ENCODE measurements at regions of chr20 and their contacts with region 1.

Region 1: DNA sequence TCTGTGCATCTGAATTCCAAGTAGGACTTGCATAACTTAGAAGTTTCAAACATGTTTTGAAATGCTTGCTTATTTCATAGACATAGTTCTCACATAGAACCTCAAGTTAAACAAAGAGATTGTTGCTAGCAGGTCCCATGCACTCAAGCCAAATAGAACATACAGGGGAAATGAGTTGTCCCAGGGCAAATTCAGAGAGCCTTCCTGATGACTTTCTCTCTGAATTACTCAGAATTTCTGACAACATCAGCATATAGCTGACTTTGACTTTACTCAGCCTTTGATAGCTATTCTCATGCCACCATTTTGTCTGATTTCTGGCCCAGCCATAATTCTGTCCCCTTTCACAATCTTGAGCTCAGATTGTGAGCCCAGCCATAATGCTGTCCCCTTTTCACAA is 333.2 kb upstream of the PLCB4 start:
- DNase-seq: no peak
- H3K4me3 ChIP-seq: no peak overlapping the region
- H3K27ac ChIP-seq: no peak overlapping the region
- H3K4me1 ChIP-seq: no peaks in the 10 kb centered on the region
- H3K27me3 ChIP-seq: no peaks in the 10 kb centered on the region
- CTCF ChIP-seq: no peak
- POLR2A ChIP-seq: no peak

Region 2: GRCh38 chr20:8693709-8694108 is 42.0 kb before region 1 on chr20:
- intact Hi-C with region 1: no loop called
- DNase-seq: no peak
- H3K4me3 ChIP-seq: no peak overlapping the region
- H3K27ac ChIP-seq: peak overlapping the region in 1 of 2 donors; percentile 29
- H3K4me1 ChIP-seq: no peaks in the 10 kb centered on the region
- H3K27me3 ChIP-seq: no peaks in the 10 kb centered on the region
- CTCF ChIP-seq: no peak
- POLR2A ChIP-seq: no peak

Region 3: GRCh38 chr20:8875586-8875985 is 139.9 kb after region 1 on chr20:
- intact Hi-C with region 1: no loop called
- DNase-seq: no peak
- H3K4me3 ChIP-seq: no peak overlapping the region
- H3K27ac ChIP-seq: no peak overlapping the region
- H3K4me1 ChIP-seq: no peaks in the 10 kb centered on the region
- H3K27me3 ChIP-seq: no peaks in the 10 kb centered on the region
- CTCF ChIP-seq: no peak
- POLR2A ChIP-seq: no peak

Region 4: DNA sequence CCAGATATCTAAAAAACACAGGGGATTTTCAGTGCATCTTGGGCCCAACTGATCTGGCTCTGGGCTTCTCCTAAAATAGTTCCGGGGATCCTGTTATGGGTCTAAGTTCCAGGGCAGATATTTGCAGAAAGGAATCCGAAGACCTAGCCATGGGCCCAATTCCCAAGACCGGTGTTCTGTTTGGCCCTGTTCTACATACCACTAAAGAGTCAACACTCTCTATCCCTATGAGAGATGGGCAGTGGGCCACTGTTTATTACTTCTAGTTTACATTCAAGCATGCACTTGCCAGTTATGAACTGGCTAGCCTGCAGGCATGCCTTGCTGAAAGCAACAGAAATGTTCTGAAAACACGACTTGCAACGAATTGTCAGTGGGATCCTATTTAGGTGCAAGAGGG is 245.8 kb after region 1 on chr20:
- intact Hi-C with region 1: loop called (anchors 10 kb)
- DNase-seq: no peak
- H3K4me3 ChIP-seq: no peak overlapping the region
- H3K27ac ChIP-seq: no peak overlapping the region
- H3K4me1 ChIP-seq: no peaks in the 10 kb centered on the region
- H3K27me3 ChIP-seq: no peaks in the 10 kb centered on the region
- CTCF ChIP-seq: no peak
- POLR2A ChIP-seq: no peak

Measured in breast epithelium (tissue), 4 donors.